Vagina (tissue), 2 donors: ENCODE measurements at regions of chr9 and their contacts with region 1.

Region 1: GRCh38 chr9:36487482-36488388 is 85.0 kb upstream of the MELK start:
- DNase-seq: peak in 1 of 2 donors; percentile 90
- H3K4me3 ChIP-seq: peak overlapping the region; percentile 95 to 97
- H3K27ac ChIP-seq: peak overlapping the region; percentile 80
- H3K4me1 ChIP-seq: peaks cover 50% of the 10 kb centered on the region
- H3K27me3 ChIP-seq: no peaks in the 10 kb centered on the region
- CTCF ChIP-seq: peak in 1 of 3 experiments; percentile 10
- POLR2A ChIP-seq: peak in 1 of 2 donors; percentile 83

Region 2: DNA sequence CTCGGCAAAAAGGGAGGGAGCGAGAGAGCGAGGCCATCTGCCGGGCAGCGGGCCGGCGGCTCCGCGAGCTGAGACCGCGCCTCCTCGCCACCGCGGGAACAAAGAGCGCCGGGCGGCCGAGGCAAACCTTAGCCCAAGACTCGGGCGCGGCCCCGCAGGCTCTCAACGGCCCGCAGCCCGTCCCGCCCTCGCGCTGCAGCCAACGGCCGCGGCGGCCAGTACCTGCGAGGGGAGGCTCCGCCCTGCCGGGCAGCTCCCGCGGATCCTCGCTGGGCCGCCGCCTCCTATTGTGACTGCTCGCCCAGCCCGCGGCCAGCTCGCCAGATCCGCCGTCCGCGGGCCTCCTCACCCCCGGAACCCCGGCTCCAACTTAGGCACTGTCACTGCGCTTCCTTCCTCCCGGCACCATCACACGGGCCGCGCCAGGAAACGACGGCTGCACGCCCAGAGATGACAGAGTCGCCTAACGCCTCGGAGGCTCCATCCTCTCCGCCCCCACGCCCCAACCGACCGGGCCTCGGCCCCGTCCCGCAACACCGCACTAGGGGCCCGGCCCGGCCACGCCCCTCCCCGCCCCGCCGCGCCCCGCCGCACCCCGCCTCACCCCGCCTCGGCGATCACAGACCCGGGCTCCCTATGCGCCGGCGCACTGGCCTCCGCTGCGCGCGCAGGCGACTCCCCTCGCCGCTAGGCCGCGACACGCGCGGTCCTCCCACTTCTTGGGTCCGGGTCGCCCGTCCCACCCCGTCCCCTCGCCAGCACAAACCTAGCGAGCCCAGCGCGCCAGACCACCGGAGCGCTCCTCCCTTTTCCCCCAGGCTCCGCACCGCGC is 87.2 kb before region 1 on chr9:
- intact Hi-C with region 1: loop called (anchors 10 kb)
- DNase-seq: peak in 1 of 2 donors; percentile 89
- H3K4me3 ChIP-seq: peak overlapping the region; percentile 74 to 87
- H3K27ac ChIP-seq: peak overlapping the region; percentile 93
- H3K4me1 ChIP-seq: peaks cover 28% of the 10 kb centered on the region
- H3K27me3 ChIP-seq: no peaks in the 10 kb centered on the region
- CTCF ChIP-seq: no peak
- POLR2A ChIP-seq: peak in 1 of 2 donors; percentile 16

Region 3: GRCh38 chr9:36470643-36471290 is 17.0 kb before region 1 on chr9:
- intact Hi-C with region 1: loop called (anchors 2 kb)
- DNase-seq: no peak
- H3K4me3 ChIP-seq: peak overlapping the region; percentile 30 to 42
- H3K27ac ChIP-seq: peak overlapping the region; percentile 75
- H3K4me1 ChIP-seq: peaks cover 12% of the 10 kb centered on the region
- H3K27me3 ChIP-seq: no peaks in the 10 kb centered on the region
- CTCF ChIP-seq: no peak
- POLR2A ChIP-seq: no peak